Left ventricle myocardium inferior (tissue), 1 donor: ENCODE measurements at regions of chr12 and their contacts with region 1.

Region 1: DNA sequence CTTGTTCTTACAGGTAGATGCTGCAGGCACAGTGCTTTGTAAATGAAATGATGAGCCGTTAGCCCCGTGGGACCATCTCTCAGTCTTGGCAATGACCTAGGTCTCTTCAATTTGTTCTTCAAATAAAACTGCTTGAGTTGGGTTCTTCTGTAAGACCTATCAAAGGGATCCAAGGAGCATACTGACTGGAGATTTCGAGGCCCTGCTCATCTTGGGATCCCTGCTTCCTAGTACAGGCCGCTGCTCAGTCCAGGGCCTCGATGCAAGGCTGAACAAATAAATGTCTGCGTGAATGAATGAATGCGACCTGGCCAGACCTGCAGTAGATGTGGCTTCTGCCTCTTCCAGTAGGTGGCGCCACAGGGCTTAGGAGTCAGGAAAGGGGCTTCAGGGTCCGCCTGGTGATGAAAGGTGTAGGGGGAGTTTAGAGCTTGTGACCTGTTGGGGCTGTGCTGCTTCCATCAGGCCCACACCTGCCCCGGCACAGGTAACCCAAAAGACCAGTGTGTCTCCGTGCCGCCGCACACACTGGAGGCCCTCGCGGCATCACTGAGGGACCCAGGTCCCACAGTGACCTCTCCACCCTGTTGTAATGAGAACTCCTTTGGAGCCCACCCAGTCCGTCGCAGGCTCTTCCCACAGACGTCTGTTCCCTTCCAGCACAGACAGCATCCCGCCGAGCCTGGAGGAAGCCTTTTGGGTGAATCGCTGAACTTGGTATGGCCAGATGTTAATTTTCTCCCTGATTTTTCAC is 4.4 kb downstream of the CACNA1C start:
- DNase-seq: peak; percentile 58
- H3K4me3 ChIP-seq: peak overlapping the region; percentile 34
- H3K27ac ChIP-seq: peak overlapping the region; percentile 66
- H3K4me1 ChIP-seq: peaks cover 91% of the 10 kb centered on the region
- H3K27me3 ChIP-seq: peaks cover 4% of the 10 kb centered on the region
- CTCF ChIP-seq: peak; percentile 76

Region 2: GRCh38 chr12:2229661-2230539 is 172.7 kb after region 1 on chr12:
- intact Hi-C with region 1: no loop called
- DNase-seq: no peak
- H3K4me3 ChIP-seq: peak overlapping the region; percentile 32
- H3K27ac ChIP-seq: peak overlapping the region; percentile 38
- H3K4me1 ChIP-seq: peaks cover 97% of the 10 kb centered on the region
- H3K27me3 ChIP-seq: no peaks in the 10 kb centered on the region
- CTCF ChIP-seq: no peak

Region 3: GRCh38 chr12:2284857-2285256 is 227.6 kb after region 1 on chr12:
- intact Hi-C with region 1: loop called (anchors 10 kb)
- DNase-seq: peak; percentile 86
- H3K4me3 ChIP-seq: no peak overlapping the region
- H3K27ac ChIP-seq: peak overlapping the region; percentile 83
- H3K4me1 ChIP-seq: peaks cover 92% of the 10 kb centered on the region
- H3K27me3 ChIP-seq: no peaks in the 10 kb centered on the region
- CTCF ChIP-seq: peak; percentile 76

Region 4: GRCh38 chr12:2583091-2583497 is 525.9 kb after region 1 on chr12:
- intact Hi-C with region 1: loop called (anchors 10 kb)
- DNase-seq: peak; percentile 75
- H3K4me3 ChIP-seq: peak overlapping the region; percentile 39
- H3K27ac ChIP-seq: peak overlapping the region; percentile 58
- H3K4me1 ChIP-seq: peaks cover 24% of the 10 kb centered on the region
- H3K27me3 ChIP-seq: no peaks in the 10 kb centered on the region
- CTCF ChIP-seq: peak; percentile 92